ENCODE measurements at regions of chr22 and their contacts with region 1.

Region 1: DNA sequence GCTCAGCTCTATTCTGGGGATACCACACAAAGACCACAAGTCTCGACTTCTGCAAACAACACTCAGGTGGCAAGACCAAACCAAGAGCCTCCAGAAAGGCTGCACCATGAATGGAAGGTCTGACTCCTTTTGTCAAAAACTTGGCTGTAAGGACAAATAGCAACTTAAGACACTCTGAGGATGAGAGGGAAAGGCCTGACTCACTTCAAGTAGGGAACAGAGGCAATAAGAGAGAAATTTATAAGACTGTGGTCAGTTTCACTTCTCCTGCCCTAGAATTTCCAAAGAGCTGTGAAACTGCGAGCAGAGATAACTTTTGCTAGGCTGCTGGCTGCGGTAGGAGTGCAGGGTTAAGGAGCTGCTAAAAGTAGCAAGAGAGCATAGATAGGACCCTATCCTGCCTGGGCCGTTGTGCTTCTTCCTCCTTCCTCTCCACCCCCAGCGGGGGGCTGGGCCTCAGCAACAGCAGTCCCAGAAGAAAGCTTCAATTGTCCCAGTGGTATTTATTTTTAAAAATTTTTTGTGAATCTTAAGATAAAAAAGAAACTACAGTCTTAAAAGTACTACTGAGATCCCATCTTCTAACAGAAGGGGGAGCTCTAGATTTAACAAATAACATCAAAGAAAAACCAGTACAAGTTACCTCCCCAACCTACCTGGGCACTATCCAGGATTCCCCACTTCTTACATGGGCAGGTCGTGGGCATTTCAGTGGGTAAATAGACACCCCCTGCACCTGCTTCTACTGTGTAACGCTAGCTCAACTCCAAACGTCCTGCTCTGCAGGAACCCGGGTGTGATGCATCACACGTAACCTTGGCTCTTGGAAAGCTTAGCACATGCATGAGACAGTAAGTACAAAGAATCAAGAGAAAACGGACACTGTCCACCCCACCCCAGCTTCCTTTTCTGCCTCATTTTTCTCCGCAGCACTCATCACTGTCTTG is 66.4 kb downstream of the SGSM3 start:
- DNase-seq: peak; percentile 84
- ATAC-seq: peak; percentile 67
- H3K4me3 ChIP-seq: peak overlapping the region; percentile 6 to 44 (median 32)
- H3K4me3 Mint-ChIP-seq: peak overlapping the region; percentile 82
- H3K27ac ChIP-seq: peak overlapping the region; percentile 61 to 69
- H3K27ac Mint-ChIP-seq: peak overlapping the region; percentile 94
- H3K4me1 ChIP-seq: peaks cover 83 to 99% of the 10 kb centered on the region in 2 donors
- H3K4me1 Mint-ChIP-seq: peaks cover 87% of the 10 kb centered on the region
- H3K27me3 ChIP-seq: no peaks in the 10 kb centered on the region
- H3K27me3 Mint-ChIP-seq: no peaks in the 10 kb centered on the region
- CTCF ChIP-seq: peak; percentile 82

Region 2: GRCh38 chr22:40396882-40397281 is 39.9 kb before region 1 on chr22:
- CTCF ChIA-PET with region 1: interaction called, 17 read pairs
- POLR2A ChIA-PET with region 1: no interaction called
- intact Hi-C with region 1: loop called (anchors 1 kb)
- DNase-seq: no peak
- ATAC-seq: no peak
- H3K4me3 ChIP-seq: no peak overlapping the region
- H3K4me3 Mint-ChIP-seq: peak overlapping the region; percentile 56
- H3K27ac ChIP-seq: peak overlapping the region; percentile 46 to 96
- H3K27ac Mint-ChIP-seq: peak overlapping the region; percentile 92
- H3K4me1 ChIP-seq: peaks cover 86% of the 10 kb centered on the region in 2 donors
- H3K4me1 Mint-ChIP-seq: peaks cover 79% of the 10 kb centered on the region
- H3K27me3 ChIP-seq: no peaks in the 10 kb centered on the region
- H3K27me3 Mint-ChIP-seq: no peaks in the 10 kb centered on the region
- CTCF ChIP-seq: no peak

Region 3: GRCh38 chr22:40449676-40450035 is 12.9 kb after region 1 on chr22:
- CTCF ChIA-PET with region 1: interaction called, 73 read pairs
- POLR2A ChIA-PET with region 1: no interaction called
- intact Hi-C with region 1: no loop called
- DNase-seq: no peak
- ATAC-seq: no peak
- H3K4me3 ChIP-seq: no peak overlapping the region
- H3K4me3 Mint-ChIP-seq: no peak overlapping the region
- H3K27ac ChIP-seq: no peak overlapping the region
- H3K27ac Mint-ChIP-seq: peak overlapping the region; percentile 41
- H3K4me1 ChIP-seq: peaks cover 34 to 47% of the 10 kb centered on the region in 2 donors
- H3K4me1 Mint-ChIP-seq: peaks cover 72% of the 10 kb centered on the region
- H3K27me3 ChIP-seq: no peaks in the 10 kb centered on the region
- H3K27me3 Mint-ChIP-seq: no peaks in the 10 kb centered on the region
- CTCF ChIP-seq: no peak

Region 4: DNA sequence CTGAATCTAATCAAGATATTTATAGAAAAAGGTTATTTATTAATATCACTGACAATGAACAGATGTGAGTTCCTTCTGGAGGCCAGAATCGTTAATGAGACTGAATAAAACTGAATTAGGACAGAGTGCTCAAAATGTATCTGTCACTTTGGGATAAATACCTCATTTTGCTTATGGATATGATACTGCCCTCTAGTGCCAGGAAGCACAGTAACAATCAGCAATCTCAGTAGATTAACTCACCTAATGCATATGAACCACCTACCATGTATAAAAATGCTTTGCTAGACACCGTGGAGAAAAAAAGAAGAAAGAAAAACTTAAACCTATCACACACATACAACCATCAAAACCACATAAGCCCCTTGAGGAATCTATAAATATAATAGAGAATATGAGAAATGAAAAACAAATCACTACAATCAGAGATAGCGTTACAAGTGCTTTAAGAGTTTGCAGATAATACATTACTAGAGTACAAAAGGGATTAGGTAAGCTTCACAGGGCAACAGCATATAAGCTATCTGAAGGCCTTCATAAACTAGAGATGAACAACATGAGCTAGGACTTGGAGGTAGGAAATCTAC is 51.0 kb after region 1 on chr22:
- CTCF ChIA-PET with region 1: interaction called, 148 read pairs
- POLR2A ChIA-PET with region 1: interaction called, 3 read pairs
- intact Hi-C with region 1: loop called (anchors 1 kb)
- DNase-seq: peak; percentile 64
- ATAC-seq: no peak
- H3K4me3 ChIP-seq: no peak overlapping the region
- H3K4me3 Mint-ChIP-seq: no peak overlapping the region
- H3K27ac ChIP-seq: peak overlapping the region in 1 of 2 donors; percentile 25
- H3K27ac Mint-ChIP-seq: peak overlapping the region; percentile 5
- H3K4me1 ChIP-seq: peaks cover 25 to 30% of the 10 kb centered on the region in 2 donors
- H3K4me1 Mint-ChIP-seq: peaks cover 26% of the 10 kb centered on the region
- H3K27me3 ChIP-seq: no peaks in the 10 kb centered on the region
- H3K27me3 Mint-ChIP-seq: no peaks in the 10 kb centered on the region
- CTCF ChIP-seq: peak; percentile 83

Region 5: DNA sequence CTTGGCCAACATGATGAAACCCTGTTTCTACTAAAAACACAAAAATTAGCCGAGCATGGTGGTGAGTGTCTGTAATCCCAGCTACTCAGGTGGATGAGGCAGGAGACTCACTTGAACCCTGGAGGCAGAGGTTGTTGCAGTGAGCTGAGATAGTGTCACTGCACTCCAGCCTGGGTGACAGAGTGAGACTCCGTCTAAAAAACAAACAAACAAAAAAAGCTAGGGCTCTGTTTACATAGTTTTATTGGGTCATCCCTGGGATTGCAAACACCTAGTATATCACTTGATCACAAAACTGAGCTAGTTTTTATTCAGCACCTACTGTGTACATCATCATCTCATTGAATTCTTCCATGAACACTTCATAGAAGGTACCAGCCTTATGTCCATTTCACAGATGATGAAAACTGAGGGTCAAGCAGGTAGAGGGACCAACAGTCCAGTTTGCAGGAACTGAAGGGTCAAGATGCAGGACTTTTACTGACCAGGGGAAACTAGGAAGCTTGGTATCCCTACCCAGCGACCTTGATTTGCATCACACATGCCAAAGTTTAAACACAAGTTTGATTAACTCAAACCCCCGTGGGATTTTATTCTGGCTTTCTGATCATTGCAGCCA is 208.9 kb after region 1 on chr22:
- CTCF ChIA-PET with region 1: interaction called, 232 read pairs
- POLR2A ChIA-PET with region 1: interaction called, 6 read pairs
- intact Hi-C with region 1: loop called (anchors 1 kb)
- DNase-seq: no peak
- ATAC-seq: no peak
- H3K4me3 ChIP-seq: peak overlapping the region in 1 of 5 experiments; percentile 7
- H3K4me3 Mint-ChIP-seq: peak overlapping the region; percentile 59
- H3K27ac ChIP-seq: no peak overlapping the region
- H3K27ac Mint-ChIP-seq: no peak overlapping the region
- H3K4me1 ChIP-seq: peaks cover 4 to 17% of the 10 kb centered on the region in 2 donors
- H3K4me1 Mint-ChIP-seq: peaks cover 11% of the 10 kb centered on the region
- H3K27me3 ChIP-seq: no peaks in the 10 kb centered on the region
- H3K27me3 Mint-ChIP-seq: no peaks in the 10 kb centered on the region
- CTCF ChIP-seq: no peak

Region 6: GRCh38 chr22:40764763-40765441 is 328.1 kb after region 1 on chr22:
- CTCF ChIA-PET with region 1: interaction called, 18 read pairs
- POLR2A ChIA-PET with region 1: no interaction called
- intact Hi-C with region 1: loop called (anchors 1 kb)
- DNase-seq: peak; percentile 77
- ATAC-seq: peak; percentile 94
- H3K4me3 ChIP-seq: peak overlapping the region in 4 of 5 experiments; percentile 23 to 42 (median 28)
- H3K4me3 Mint-ChIP-seq: peak overlapping the region; percentile 71
- H3K27ac ChIP-seq: peak overlapping the region; percentile 81 to 84
- H3K27ac Mint-ChIP-seq: peak overlapping the region; percentile 93
- H3K4me1 ChIP-seq: peaks cover 37 to 44% of the 10 kb centered on the region in 2 donors
- H3K4me1 Mint-ChIP-seq: peaks cover 43% of the 10 kb centered on the region
- H3K27me3 ChIP-seq: no peaks in the 10 kb centered on the region
- H3K27me3 Mint-ChIP-seq: no peaks in the 10 kb centered on the region
- CTCF ChIP-seq: no peak

Measured in B cell (primary cell).